ENCODE measurements at regions of chr9 and their contacts with region 1.

Region 1: DNA sequence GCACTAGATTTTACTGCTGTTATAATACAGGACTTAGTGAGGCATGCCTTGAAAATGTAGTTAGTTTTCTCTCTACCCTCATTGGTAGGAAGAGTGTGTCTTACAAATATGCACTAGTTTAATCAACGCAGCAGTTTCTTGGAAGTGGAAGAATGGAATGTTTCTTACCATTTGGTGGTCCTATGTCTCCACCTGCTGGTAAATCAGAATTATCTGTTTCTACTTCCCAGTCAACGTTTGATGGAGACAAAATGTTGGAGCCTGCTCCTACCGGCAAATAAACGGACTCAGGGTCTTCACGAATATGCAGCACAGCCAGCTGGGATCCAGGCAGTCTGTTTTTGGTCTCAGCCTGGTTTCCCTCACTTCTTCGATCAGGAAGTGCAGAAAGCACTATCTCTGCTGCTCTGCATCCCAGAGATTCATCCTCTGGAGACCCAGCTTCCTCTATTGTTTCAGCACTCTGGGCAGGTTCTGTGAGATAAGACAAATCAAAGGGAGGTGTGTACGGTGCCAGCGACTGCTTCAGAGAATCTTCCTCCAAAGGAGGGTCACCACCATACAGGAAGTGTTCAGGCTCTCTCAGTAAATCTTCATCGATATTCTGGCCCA is 59.5 kb upstream of the PCA3 start:
- DNase-seq: no peak
- H3K4me3 ChIP-seq: no peak overlapping the region
- H3K27ac ChIP-seq: peak overlapping the region in 1 of 4 donors; percentile 38
- H3K4me1 ChIP-seq: peaks cover 0 to 42% (median 25%) of the 10 kb centered on the region in 4 donors
- H3K27me3 ChIP-seq: no peaks in the 10 kb centered on the region
- CTCF ChIP-seq: peak; percentile 26 to 67 (median 46)
- EP300 ChIP-seq: no peak
- POLR2A ChIP-seq: no peak

Region 2: GRCh38 chr9:76490249-76490990 is 214.3 kb before region 1 on chr9:
- intact Hi-C with region 1: no loop called
- DNase-seq: no peak
- H3K4me3 ChIP-seq: no peak overlapping the region
- H3K27ac ChIP-seq: no peak overlapping the region
- H3K4me1 ChIP-seq: no peaks in the 10 kb centered on the region
- H3K27me3 ChIP-seq: no peaks in the 10 kb centered on the region
- CTCF ChIP-seq: no peak
- EP300 ChIP-seq: no peak
- POLR2A ChIP-seq: no peak

Region 3: GRCh38 chr9:76634356-76635022 is 70.2 kb before region 1 on chr9:
- intact Hi-C with region 1: loop called (anchors 10 kb)
- DNase-seq: no peak
- H3K4me3 ChIP-seq: no peak overlapping the region
- H3K27ac ChIP-seq: peak overlapping the region; percentile 44 to 51 (median 47)
- H3K4me1 ChIP-seq: peaks cover 0 to 12% (median 9%) of the 10 kb centered on the region in 4 donors
- H3K27me3 ChIP-seq: no peaks in the 10 kb centered on the region
- CTCF ChIP-seq: no peak
- EP300 ChIP-seq: no peak
- POLR2A ChIP-seq: no peak

Region 4: GRCh38 chr9:76667521-76667957 is 37.2 kb before region 1 on chr9:
- intact Hi-C with region 1: loop called (anchors 5 kb)
- DNase-seq: no peak
- H3K4me3 ChIP-seq: no peak overlapping the region
- H3K27ac ChIP-seq: no peak overlapping the region
- H3K4me1 ChIP-seq: no peaks in the 10 kb centered on the region
- H3K27me3 ChIP-seq: no peaks in the 10 kb centered on the region
- CTCF ChIP-seq: no peak
- EP300 ChIP-seq: no peak
- POLR2A ChIP-seq: no peak